ENCODE measurements at regions of chr16 and their contacts with region 1.

Region 1: DNA sequence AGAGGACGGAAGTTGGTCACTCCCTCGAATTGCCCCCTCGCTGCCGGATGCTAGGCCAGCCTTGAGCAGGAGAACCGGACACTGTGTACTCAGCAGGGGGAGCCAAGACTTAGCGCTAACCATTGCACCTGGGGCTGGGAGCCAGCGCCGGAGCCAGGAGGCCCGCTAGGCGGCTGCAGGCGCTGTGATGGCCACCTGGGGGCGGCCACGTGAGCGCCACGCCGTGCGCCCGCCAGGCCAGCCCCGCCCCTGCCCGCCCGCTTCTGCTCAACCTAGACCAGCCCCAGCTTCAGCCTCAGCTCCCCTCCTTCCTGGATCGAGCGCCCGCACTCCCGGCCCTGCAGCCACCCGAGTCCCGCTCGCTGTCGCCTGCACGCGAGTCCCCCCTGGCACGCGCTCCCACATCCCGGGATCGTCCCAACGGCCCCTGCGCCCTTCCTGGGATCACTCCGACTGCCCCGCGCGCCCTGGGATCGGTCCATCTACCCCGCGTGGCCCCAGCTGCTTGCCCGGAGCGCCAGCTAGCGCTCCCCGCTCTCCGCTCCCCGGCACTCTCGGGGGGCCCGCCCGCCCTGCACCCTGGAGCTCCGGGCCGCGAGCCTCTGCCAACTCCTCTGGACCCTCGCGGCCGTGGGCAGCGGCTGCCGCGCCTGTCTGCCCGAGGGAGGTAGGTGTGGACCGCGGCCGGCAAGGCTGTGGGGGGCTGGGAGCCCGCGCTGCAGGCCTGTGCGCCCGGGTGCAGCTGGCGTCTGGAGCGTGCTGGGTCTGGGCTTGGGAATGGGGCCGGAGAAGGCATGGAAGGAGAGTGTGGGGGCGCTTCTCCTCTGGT is at the start of gene EEF2K:
- DNase-seq: peak; percentile 94
- H3K4me3 Mint-ChIP-seq: peak within 1 kb of the TSS; percentile 89
- H3K27ac Mint-ChIP-seq: peak within 1 kb of the TSS; percentile 94
- H3K4me1 Mint-ChIP-seq: peaks cover 27% of the 10 kb centered on the region
- H3K27me3 Mint-ChIP-seq: no peaks in the 10 kb centered on the region
- total RNA-seq, gene EEF2K: 30.5 and 33.9 TPM in 2 replicates

Region 2: GRCh38 chr16:22222978-22223377 is 16.8 kb after region 1 on chr16:
- intact Hi-C with region 1: loop called (anchors 2 kb)
- DNase-seq: no peak
- H3K4me3 Mint-ChIP-seq: no peak overlapping the region
- H3K27ac Mint-ChIP-seq: no peak overlapping the region
- H3K4me1 Mint-ChIP-seq: peaks cover 14% of the 10 kb centered on the region
- H3K27me3 Mint-ChIP-seq: no peaks in the 10 kb centered on the region

Region 3: DNA sequence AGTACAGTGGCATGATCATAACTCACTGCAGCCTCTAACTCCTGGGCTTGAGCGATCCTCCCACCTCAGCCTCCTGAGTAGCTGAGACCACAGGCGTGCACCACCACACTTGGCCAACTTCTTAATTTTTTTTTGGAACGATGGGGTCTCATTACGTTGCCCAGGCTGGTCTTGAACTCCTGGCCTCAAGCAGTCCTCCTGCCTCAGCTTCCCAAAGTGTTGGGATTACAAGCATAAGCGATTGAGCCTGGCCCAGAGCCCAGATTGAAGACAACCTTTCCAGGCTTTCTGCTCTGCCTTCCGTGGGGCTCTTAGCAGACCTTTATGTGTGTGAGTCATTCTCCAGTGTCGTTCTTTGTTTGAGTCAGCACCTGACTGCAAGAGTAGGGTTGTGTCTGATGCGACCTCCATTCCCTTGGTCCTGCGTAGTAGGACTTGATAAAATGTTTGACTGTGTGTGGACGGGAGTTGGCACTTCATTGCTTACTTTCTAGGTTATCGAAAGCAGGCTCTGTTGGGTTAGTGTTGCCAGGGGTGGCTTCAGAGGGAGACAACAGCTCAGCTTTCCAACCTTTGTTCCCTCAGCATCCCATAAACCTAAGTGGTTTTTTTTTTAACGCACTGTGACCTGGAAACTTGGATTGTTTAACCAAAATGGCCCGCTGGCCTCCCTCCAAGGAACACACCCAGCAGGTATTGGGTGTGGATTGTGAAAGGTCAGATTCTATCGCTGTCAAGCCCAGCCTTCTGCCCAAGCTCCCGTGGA is 26.2 kb after region 1 on chr16:
- intact Hi-C with region 1: loop called (anchors 2 kb)
- DNase-seq: peak; percentile 63
- H3K4me3 Mint-ChIP-seq: peak overlapping the region; percentile 26
- H3K27ac Mint-ChIP-seq: peak overlapping the region; percentile 64
- H3K4me1 Mint-ChIP-seq: peaks cover 14% of the 10 kb centered on the region
- H3K27me3 Mint-ChIP-seq: no peaks in the 10 kb centered on the region

Region 4: DNA sequence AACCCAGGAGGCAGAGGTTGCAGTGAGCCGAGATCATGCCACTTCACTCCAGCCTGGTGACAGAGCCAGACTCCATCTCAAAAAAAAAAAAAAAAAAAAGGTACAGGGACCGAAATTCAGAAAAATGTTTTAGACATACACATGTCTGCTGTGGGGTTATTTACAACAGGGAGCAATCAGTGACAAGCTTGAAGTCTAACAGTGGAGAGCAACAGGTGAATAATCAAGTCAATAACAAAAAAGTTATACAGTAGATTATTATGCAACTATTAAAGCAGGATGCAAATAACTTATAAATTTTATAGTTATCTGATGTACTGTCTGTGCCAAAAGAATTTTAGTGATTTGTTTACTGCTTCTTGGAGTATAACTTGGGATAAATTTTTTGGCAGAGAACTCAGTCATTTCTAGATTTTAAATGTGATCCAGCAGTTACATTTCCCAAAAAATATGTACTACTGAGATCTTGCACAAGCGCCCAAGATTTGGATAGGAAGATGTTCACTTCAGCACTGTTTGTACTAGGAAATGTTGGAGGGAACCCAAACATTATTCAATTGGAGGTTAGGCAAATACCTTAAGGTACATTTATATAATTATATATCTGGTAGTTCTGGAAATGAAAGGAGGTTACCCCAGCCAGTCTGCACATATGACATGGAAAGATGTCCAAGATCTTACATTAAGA is 33.9 kb after region 1 on chr16:
- intact Hi-C with region 1: loop called (anchors 1 kb)
- DNase-seq: no peak
- H3K4me3 Mint-ChIP-seq: no peak overlapping the region
- H3K27ac Mint-ChIP-seq: peak overlapping the region; percentile 84
- H3K4me1 Mint-ChIP-seq: peaks cover 24% of the 10 kb centered on the region
- H3K27me3 Mint-ChIP-seq: no peaks in the 10 kb centered on the region

Region 5: GRCh38 chr16:22262460-22262859 is 56.2 kb after region 1 on chr16:
- intact Hi-C with region 1: loop called (anchors 5 kb)
- DNase-seq: peak; percentile 60
- H3K4me3 Mint-ChIP-seq: no peak overlapping the region
- H3K27ac Mint-ChIP-seq: peak overlapping the region; percentile 53
- H3K4me1 Mint-ChIP-seq: peaks cover 22% of the 10 kb centered on the region
- H3K27me3 Mint-ChIP-seq: no peaks in the 10 kb centered on the region

Region 6: GRCh38 chr16:22297114-22297878 is 91.1 kb after region 1 on chr16 and contains the start of gene POLR3E:
- intact Hi-C with region 1: loop called (anchors 1 kb)
- DNase-seq: peak; percentile 100
- H3K4me3 Mint-ChIP-seq: peak within 1 kb of the TSS; percentile 94
- H3K27ac Mint-ChIP-seq: peak within 1 kb of the TSS; percentile 97
- H3K4me1 Mint-ChIP-seq: peaks cover 33% of the 10 kb centered on the region
- H3K27me3 Mint-ChIP-seq: no peaks in the 10 kb centered on the region
- total RNA-seq, gene POLR3E: 102 and 111 TPM in 2 replicates

Region 7: DNA sequence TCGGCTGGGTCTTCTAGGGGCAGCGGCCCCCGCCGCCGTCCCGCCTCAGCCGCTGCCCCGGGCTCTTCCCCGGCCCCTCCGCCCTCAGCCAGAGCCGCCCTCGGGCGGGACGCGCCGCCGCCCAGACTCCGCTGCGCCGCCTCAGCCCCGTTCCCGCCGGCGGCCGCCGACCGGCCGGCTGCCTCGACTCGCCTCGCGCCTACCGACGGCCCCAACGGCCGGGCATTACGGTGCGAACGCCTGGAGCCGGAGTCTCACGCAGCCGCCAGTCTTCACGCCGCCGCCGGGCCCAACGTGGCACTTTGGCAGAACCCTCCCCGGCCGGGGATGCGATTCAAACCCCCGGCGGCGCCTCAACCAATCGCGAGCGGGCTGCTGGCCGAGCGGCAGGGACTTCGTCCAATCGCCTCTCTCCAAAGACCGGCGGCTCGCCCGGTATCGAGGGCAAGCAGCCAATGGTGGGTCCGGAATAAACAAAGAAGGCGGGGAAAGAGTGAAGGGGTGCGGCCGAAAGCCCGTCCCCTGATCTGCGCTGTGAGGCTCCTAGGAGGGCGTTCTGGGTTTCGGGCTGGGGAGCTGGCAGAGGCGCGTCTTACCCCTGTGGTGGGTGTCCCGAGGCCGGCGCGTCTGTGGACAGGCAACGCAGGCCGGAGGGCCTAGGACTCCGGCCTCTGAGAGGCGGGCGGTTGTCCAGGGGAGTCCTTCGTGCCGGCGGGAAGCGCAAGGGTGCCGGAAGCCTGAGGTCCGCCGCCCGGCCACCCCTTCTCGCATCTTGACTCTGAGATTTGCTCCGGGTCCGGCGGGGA is 168.3 kb after region 1 on chr16 and contains the start of gene CDR2:
- intact Hi-C with region 1: loop called (anchors 2 kb)
- DNase-seq: peak; percentile 100
- H3K4me3 Mint-ChIP-seq: peak within 1 kb of the TSS; percentile 98
- H3K27ac Mint-ChIP-seq: peak within 1 kb of the TSS; percentile 95
- H3K4me1 Mint-ChIP-seq: peaks cover 39% of the 10 kb centered on the region
- H3K27me3 Mint-ChIP-seq: peaks cover 2% of the 10 kb centered on the region
- total RNA-seq, gene CDR2: 38.2 and 40.9 TPM in 2 replicates

Measured in activated CD4-positive, alpha-beta T cell treated with anti-CD3 and anti-CD28 coated beads, Interleukin-2, amount 10 ng/mL, durations not matched to agents 24 days and 14 days (primary cell).